MCF 10A (cell line): ENCODE measurements at regions of chr16 and their contacts with region 1.

Region 1: DNA sequence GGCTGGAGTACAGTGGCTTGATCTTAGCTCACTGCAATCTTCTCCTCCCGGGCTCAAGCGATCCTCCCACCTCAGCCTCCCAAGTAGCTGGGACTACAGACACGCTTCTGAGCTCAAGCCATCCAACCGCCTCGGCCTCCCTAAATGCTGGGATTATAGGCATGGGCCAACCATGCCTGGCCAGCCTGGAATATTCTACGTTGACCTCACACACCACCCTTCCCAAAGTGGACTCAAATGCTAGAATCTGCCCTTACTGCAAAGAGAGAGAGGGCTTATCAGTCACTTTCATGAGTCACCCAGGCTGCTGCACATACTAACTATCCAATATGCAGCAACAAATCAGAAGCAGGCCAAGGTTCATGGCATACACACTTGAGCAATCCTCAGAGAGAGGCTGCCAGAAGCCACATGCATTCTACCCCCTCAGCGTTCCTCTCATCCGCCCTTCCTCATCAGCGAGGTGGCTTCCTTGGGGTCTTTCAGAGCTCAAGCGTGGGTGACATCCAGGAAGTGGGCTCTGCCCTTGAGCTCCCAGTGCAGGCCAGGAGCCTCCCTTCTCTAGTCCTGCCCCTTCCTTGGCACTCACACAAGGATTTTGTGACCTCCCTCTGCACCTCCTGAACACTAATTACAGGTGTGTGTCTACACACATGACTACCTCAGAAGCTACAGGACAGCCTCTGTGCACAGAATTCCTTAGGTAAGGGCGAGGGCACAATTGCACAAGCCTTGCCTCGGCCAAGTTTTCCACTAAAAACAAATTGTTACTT is 24.8 kb upstream of the SIAH1 start:
- DNase-seq: peak; percentile 91
- H3K4me3 Mint-ChIP-seq: peak overlapping the region; percentile 42
- H3K27ac Mint-ChIP-seq: peak overlapping the region; percentile 71
- H3K4me1 Mint-ChIP-seq: peaks cover 26% of the 10 kb centered on the region
- H3K27me3 Mint-ChIP-seq: no peaks in the 10 kb centered on the region
- CTCF ChIP-seq: no peak

Region 2: GRCh38 chr16:48378836-48379235 is 31.2 kb before region 1 on chr16:
- CTCF ChIA-PET with region 1: interaction called, 6 read pairs
- POLR2A ChIA-PET with region 1: interaction called, 21 read pairs
- intact Hi-C with region 1: no loop called
- DNase-seq: no peak
- H3K4me3 Mint-ChIP-seq: no peak overlapping the region
- H3K27ac Mint-ChIP-seq: peak overlapping the region; percentile 49
- H3K4me1 Mint-ChIP-seq: peaks cover 45% of the 10 kb centered on the region
- H3K27me3 Mint-ChIP-seq: no peaks in the 10 kb centered on the region
- CTCF ChIP-seq: no peak

Region 3: DNA sequence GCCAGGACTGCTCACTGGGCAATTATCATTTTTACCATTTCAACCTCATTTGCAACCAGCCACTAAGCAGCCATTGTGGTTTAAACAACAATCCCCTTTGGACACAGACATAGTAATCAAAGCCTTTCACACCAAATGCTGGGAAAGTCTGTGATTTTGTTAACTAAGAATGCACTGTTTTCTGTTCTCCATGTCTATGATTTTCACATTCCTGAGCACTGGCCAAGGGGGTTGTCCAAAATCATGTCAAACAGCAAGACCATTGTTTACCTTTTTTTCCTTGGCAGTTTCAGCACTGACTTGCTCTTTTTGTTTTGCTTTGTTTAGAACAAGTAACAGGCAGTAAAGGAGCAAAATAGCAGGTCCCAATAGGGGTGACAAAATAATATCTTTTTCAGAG is 81.5 kb after region 1 on chr16:
- CTCF ChIA-PET with region 1: interaction called, 3 read pairs
- POLR2A ChIA-PET with region 1: interaction called, 11 read pairs
- intact Hi-C with region 1: no loop called
- DNase-seq: peak; percentile 33
- H3K4me3 Mint-ChIP-seq: no peak overlapping the region
- H3K27ac Mint-ChIP-seq: peak overlapping the region; percentile 81
- H3K4me1 Mint-ChIP-seq: peaks cover 17% of the 10 kb centered on the region
- H3K27me3 Mint-ChIP-seq: no peaks in the 10 kb centered on the region
- CTCF ChIP-seq: no peak

Region 4: DNA sequence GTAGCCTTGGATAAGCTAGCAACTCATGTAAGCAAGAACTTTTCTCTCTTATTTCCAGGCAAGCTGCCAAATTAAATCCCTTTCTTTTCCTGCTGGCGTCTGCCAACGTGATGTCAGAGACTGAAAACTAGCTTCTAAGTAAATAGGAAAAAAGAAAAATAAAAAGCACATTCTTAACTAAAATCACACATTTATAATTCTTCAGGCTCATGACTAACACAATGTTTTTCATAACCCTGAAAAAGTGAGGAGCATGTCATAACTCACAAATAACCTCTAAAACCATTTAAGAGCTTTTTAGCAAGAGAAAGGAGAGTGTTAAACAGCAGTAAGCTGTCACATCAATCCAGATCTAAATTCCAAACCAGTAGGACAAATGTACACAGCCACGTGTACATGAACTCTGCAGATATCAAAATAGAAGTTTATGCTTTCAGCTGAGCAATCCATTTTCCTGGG is 89.9 kb after region 1 on chr16:
- CTCF ChIA-PET with region 1: no interaction called
- POLR2A ChIA-PET with region 1: interaction called, 11 read pairs
- intact Hi-C with region 1: no loop called
- DNase-seq: peak; percentile 87
- H3K4me3 Mint-ChIP-seq: no peak overlapping the region
- H3K27ac Mint-ChIP-seq: peak overlapping the region; percentile 73
- H3K4me1 Mint-ChIP-seq: peaks cover 12% of the 10 kb centered on the region
- H3K27me3 Mint-ChIP-seq: no peaks in the 10 kb centered on the region
- CTCF ChIP-seq: no peak